Activated CD4-positive, alpha-beta memory T cell treated with anti-CD3 and anti-CD28 coated beads, Interleukin-2, amount 10 ng/mL, durations not matched to agents 7 days and 5 days (primary cell): ENCODE measurements at regions of chr17 and their contacts with region 1.

Region 1: DNA sequence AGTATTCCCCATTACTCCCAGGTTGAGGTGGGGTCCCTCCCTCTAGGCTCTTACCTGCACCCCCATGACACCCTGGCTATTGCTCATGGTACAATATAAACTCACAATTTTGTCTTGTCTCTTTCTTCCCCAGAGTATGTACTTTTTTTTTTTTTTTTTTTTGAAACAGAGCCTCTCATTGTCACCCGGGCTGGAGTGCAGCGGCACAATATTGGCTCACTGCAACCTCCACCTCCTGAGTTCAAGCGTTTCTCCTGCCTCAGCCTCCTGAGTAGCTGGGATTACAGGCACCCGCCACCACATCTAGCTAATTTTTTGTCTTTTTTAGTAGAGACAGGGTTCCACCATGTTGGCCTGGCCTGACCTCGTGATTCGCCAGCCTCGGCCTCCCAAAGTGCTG is 8.5 kb downstream of the KANSL1 start:
- DNase-seq: no peak
- H3K4me3 Mint-ChIP-seq: no peak overlapping the region
- H3K27ac Mint-ChIP-seq: no peak overlapping the region
- H3K4me1 Mint-ChIP-seq: peaks cover 79% of the 10 kb centered on the region
- H3K27me3 Mint-ChIP-seq: no peaks in the 10 kb centered on the region

Region 2: DNA sequence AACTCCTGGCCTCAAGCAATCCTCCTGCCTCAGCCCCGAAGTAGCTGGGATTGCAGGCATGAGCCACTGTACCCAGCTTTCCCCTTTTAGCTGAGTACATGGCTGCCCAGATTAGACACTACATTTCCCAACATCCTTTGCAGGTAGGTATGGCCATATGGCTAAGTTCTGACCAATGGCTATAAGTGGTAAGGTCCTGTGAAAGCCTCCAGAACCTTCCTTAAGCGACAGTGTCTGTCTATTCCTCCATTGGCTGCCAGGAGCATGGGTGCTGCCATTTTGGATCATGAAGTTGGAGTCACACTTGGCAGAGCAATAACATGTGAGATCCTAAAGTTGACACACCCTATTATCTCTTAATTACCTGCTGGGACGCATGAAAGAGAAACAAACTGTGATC is 424.9 kb before region 1 on chr17:
- CTCF ChIA-PET with region 1: no interaction called
- POLR2A ChIA-PET with region 1: no interaction called
- DNase-seq: no peak
- H3K4me3 Mint-ChIP-seq: no peak overlapping the region
- H3K27ac Mint-ChIP-seq: no peak overlapping the region
- H3K4me1 Mint-ChIP-seq: no peaks in the 10 kb centered on the region
- H3K27me3 Mint-ChIP-seq: peaks cover 18% of the 10 kb centered on the region

Region 3: DNA sequence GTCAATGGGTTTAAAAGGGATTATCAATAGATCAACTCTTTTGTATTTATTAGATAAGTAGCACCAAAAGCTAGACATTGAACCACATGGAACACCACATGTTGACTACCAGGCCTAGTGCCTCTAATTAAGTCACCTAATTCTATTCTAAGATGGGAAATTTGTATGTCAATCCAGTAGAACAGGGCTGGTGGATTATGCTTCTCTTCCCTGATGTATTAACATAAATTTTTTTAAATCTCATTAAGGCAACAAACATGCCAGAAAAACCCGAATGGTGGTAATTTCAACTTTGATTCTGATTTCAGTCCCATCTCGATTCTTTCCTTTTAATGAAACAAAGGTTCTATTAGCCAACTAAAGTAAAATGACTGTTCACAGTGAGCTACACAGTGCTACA is 84.1 kb before region 1 on chr17:
- CTCF ChIA-PET with region 1: interaction called, 20 read pairs
- POLR2A ChIA-PET with region 1: no interaction called
- DNase-seq: no peak
- H3K4me3 Mint-ChIP-seq: no peak overlapping the region
- H3K27ac Mint-ChIP-seq: peak overlapping the region; percentile 71
- H3K4me1 Mint-ChIP-seq: peaks cover 46% of the 10 kb centered on the region
- H3K27me3 Mint-ChIP-seq: no peaks in the 10 kb centered on the region